ENCODE measurements at regions of chr11 and their contacts with region 1.

Region 1: DNA sequence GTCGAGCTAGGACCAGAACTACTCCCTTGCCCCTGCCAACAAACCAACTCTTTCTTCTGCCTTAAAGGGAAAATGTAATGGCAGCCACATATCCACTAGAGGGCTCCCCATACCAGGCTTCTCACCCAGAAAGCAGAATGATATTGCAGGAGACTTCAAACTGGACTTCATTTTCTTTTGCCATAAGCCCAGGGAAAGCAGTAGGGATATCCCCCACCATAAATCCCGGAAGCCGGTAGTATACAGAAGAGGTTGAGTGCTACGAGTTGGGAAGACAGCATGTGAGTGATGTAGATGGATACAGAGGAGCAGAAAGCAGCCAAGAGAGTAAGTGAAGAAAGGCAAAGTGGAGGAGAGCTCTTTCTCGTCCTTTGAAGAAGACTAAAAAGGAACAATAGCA is 12.1 kb downstream of the PLAAT5 start:
- DNase-seq: peak in 1 of 2 donors; percentile 56
- ATAC-seq: peak; percentile 81
- H3K4me3 ChIP-seq: no peak overlapping the region
- H3K27ac ChIP-seq: no peak overlapping the region
- H3K4me1 ChIP-seq: no peaks in the 10 kb centered on the region
- H3K27me3 ChIP-seq: no peaks in the 10 kb centered on the region

Region 2: GRCh38 chr11:63635762-63636465 is 157.0 kb after region 1 on chr11:
- intact Hi-C with region 1: loop called (anchors 1 to 5 kb)
- DNase-seq: peak in 1 of 2 donors; percentile 59
- ATAC-seq: peak; percentile 87
- H3K4me3 ChIP-seq: no peak overlapping the region
- H3K27ac ChIP-seq: no peak overlapping the region
- H3K4me1 ChIP-seq: no peaks in the 10 kb centered on the region
- H3K27me3 ChIP-seq: no peaks in the 10 kb centered on the region

Region 3: GRCh38 chr11:63671322-63672155 is 192.6 kb after region 1 on chr11 and contains the start of gene ATL3:
- intact Hi-C with region 1: no loop called
- DNase-seq: peak; percentile 98 to 100
- ATAC-seq: peak; percentile 97
- H3K4me3 ChIP-seq: peak within 1 kb of the TSS; percentile 84 to 87
- H3K27ac ChIP-seq: peak within 1 kb of the TSS; percentile 87 to 100
- H3K4me1 ChIP-seq: no peaks in the 10 kb centered on the region
- H3K27me3 ChIP-seq: no peaks in the 10 kb centered on the region
- total RNA-seq, gene ATL3: 147 to 220 TPM